ENCODE measurements at regions of chr17 and their contacts with region 1.

Region 1: DNA sequence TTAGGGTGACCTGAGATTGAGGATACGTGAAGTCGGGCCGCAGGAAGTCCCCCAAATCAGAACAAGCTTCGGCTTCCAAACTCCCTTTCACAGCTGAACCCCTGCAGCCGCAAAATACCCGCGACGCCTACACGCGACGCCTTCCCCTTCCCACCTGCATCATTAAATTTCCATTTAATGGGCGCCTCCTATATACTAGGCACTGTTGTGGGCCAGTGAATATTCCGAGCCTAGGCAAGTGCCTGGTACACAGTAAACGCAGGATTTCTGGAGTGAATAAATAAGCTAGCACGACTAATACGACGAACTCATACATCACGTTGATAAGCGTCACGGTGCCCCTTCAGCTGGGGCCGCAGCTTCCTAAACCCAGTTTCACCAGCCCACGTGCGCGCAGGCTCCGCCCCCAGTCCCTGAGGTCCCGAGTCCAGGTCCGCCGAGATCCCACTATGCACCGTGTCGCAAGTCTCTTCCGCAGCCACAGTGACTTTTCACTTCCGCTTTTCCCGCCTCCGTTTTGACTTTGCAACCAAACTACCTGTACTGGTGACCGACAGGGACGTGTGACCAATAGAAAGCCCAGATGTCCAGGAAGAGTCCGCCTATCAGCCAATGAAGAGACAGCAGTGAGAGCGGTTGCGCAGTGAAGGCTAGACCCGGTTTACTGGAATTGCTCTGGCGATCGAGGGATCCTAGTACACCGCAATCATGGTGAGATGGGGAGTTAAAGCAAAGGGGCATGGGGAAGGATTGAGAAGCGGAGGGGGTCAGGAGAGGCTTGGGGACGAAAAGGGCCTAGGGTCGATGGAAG is at the start of gene PSMB3:
- DNase-seq: peak; percentile 99
- ATAC-seq: peak; percentile 95
- H3K4me3 Mint-ChIP-seq: peak within 1 kb of the TSS; percentile 93
- H3K27ac Mint-ChIP-seq: peak within 1 kb of the TSS; percentile 99
- H3K4me1 Mint-ChIP-seq: peaks cover 43% of the 10 kb centered on the region
- H3K27me3 Mint-ChIP-seq: peaks cover 23% of the 10 kb centered on the region
- total RNA-seq, gene PSMB3: 337 to 396 TPM

Region 2: GRCh38 chr17:38605888-38606645 is 146.3 kb before region 1 on chr17 and contains the start of gene SRCIN1:
- CTCF ChIA-PET with region 1: no interaction called
- POLR2A ChIA-PET with region 1: no interaction called
- intact Hi-C with region 1: loop called in 1 of 2 experiments (anchors 2 kb)
- DNase-seq: peak; percentile 79
- ATAC-seq: peak; percentile 42
- H3K4me3 Mint-ChIP-seq: peak within 1 kb of the TSS; percentile 66
- H3K27ac Mint-ChIP-seq: no peak within 1 kb of the TSS
- H3K4me1 Mint-ChIP-seq: peaks cover 16% of the 10 kb centered on the region
- H3K27me3 Mint-ChIP-seq: peaks cover 56% of the 10 kb centered on the region
- total RNA-seq, gene SRCIN1: 0.72 to 0.73 TPM

Region 3: DNA sequence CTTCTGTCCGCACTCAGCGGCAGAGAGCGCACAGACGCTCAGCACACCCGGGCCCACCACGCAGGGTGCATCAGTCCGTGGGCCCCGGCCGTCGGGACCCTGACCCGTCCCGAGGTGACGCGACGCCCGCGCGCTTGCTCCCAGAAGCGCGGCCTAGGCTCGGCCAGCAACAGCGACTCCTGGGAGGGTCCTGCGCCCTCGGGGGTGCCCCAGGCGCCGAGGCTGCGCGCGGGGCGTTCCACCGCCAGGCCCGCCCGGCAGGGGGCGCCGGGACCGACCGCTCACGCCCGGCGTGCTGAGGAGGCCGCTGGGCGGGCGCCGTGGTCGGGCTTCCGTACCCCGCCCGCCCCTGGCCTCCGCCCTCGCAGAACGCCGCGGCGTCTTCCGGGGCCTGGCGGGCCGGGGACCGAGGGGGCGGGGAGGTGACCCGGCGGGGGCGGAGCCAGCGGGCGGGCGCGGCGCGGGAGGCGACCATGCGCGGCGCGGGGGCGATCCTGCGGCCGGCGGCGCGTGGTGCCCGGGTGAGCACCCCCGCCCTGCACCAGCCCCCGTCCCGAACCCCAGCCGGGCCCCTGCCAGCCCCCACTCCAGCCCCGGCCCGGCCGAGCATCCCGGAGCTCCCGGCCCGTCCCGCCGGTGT is 22.3 kb before region 1 on chr17 and contains the start of gene CISD3:
- CTCF ChIA-PET with region 1: interaction called, 6 read pairs
- POLR2A ChIA-PET with region 1: interaction called, 4 read pairs
- intact Hi-C with region 1: loop called (anchors 1 to 2 kb)
- DNase-seq: peak; percentile 92
- ATAC-seq: peak; percentile 66
- H3K4me3 Mint-ChIP-seq: peak within 1 kb of the TSS; percentile 91
- H3K27ac Mint-ChIP-seq: peak within 1 kb of the TSS; percentile 100
- H3K4me1 Mint-ChIP-seq: peaks cover 81% of the 10 kb centered on the region
- H3K27me3 Mint-ChIP-seq: no peaks in the 10 kb centered on the region
- total RNA-seq, gene CISD3: 49.4 to 58.6 TPM

Region 4: GRCh38 chr17:38824899-38825761 is 72.8 kb after region 1 on chr17 and contains the start of gene CWC25:
- CTCF ChIA-PET with region 1: interaction called, 3 read pairs
- POLR2A ChIA-PET with region 1: no interaction called
- intact Hi-C with region 1: loop called in 1 of 2 experiments (anchors 1 kb)
- DNase-seq: peak; percentile 95
- ATAC-seq: peak; percentile 82
- H3K4me3 Mint-ChIP-seq: peak within 1 kb of the TSS; percentile 99
- H3K27ac Mint-ChIP-seq: peak within 1 kb of the TSS; percentile 99
- H3K4me1 Mint-ChIP-seq: peaks cover 27% of the 10 kb centered on the region
- H3K27me3 Mint-ChIP-seq: no peaks in the 10 kb centered on the region
- total RNA-seq, gene CWC25: 23.3 to 24.0 TPM

Region 5: GRCh38 chr17:38898812-38899348 is 146.6 kb after region 1 on chr17:
- CTCF ChIA-PET with region 1: no interaction called
- POLR2A ChIA-PET with region 1: interaction called, 3 read pairs
- intact Hi-C with region 1: loop called in 1 of 2 experiments (anchors 1 kb)
- DNase-seq: peak; percentile 95
- ATAC-seq: peak; percentile 91
- H3K4me3 Mint-ChIP-seq: peak overlapping the region; percentile 70
- H3K27ac Mint-ChIP-seq: peak overlapping the region; percentile 98
- H3K4me1 Mint-ChIP-seq: peaks cover 65% of the 10 kb centered on the region
- H3K27me3 Mint-ChIP-seq: no peaks in the 10 kb centered on the region

Measured in activated CD4-positive, alpha-beta T cell treated with anti-CD3 and anti-CD28 coated beads for 36 hours (primary cell).